Naive thymus-derived CD4-positive, alpha-beta T cell (primary cell): ENCODE measurements at regions of chr2 and their contacts with region 1.

Region 1: DNA sequence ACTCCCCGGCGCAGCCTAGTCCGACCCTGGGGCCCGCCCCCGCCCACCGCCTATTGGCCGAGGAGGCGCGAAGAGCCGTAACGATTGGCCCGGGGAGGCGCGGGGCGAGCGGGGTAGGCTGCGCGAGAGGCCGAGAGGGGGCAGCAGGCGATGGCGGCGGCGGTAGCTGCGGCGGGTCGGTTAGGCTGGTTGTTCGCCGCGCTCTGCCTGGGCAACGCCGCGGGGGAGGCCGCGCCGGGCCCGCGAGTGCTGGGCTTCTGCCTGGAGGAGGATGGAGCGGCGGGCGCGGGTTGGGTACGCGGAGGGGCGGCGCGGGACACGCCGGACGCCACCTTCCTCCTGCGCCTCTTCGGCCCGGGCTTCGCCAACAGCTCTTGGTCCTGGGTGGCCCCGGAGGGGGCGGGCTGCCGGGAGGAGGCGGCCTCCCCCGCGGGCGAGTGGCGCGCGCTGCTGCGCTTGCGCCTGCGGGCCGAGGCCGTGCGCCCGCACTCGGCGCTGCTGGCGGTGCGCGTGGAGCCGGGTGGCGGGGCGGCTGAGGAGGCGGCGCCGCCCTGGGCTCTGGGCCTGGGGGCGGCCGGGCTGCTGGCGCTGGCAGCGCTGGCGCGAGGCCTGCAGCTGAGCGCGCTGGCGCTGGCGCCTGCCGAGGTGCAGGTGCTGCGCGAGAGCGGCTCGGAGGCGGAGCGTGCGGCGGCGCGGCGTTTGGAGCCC is at the start of gene CNNM3:
- DNase-seq: peak; percentile 89 to 99 (median 93)
- ATAC-seq: peak; percentile 96
- H3K4me3 ChIP-seq: peak within 1 kb of the TSS; percentile 74
- H3K4me3 Mint-ChIP-seq: peak within 1 kb of the TSS; percentile 86 to 96 (median 92)
- H3K27ac ChIP-seq: peak within 1 kb of the TSS; percentile 79
- H3K27ac Mint-ChIP-seq: peak within 1 kb of the TSS; percentile 75 to 96 (median 86)
- H3K4me1 ChIP-seq: peaks cover 37 to 43% of the 10 kb centered on the region in 2 donors
- H3K4me1 Mint-ChIP-seq: peaks cover 36 to 62% (median 58%) of the 10 kb centered on the region in 7 donors
- H3K27me3 ChIP-seq: no peaks in the 10 kb centered on the region
- H3K27me3 Mint-ChIP-seq: no peaks in the 10 kb centered on the region
- total RNA-seq, gene CNNM3: 32.1 to 51.5 (median 44.6) TPM

Region 2: GRCh38 chr2:96208143-96209010 is 607.9 kb before region 1 on chr2 and contains the start of gene STARD7:
- CTCF ChIA-PET with region 1: no interaction called
- POLR2A ChIA-PET with region 1: no interaction called
- intact Hi-C with region 1: loop called in 1 of 2 experiments (anchors 5 kb)
- DNase-seq: peak; percentile 93 to 97 (median 95)
- ATAC-seq: peak; percentile 92
- H3K4me3 ChIP-seq: peak within 1 kb of the TSS; percentile 83
- H3K4me3 Mint-ChIP-seq: peak within 1 kb of the TSS; percentile 88 to 100 (median 95)
- H3K27ac ChIP-seq: peak within 1 kb of the TSS; percentile 87
- H3K27ac Mint-ChIP-seq: peak within 1 kb of the TSS; percentile 86 to 99 (median 93)
- H3K4me1 ChIP-seq: peaks cover 30 to 37% of the 10 kb centered on the region in 2 donors
- H3K4me1 Mint-ChIP-seq: peaks cover 37 to 57% (median 51%) of the 10 kb centered on the region in 7 donors
- H3K27me3 ChIP-seq: no peaks in the 10 kb centered on the region
- H3K27me3 Mint-ChIP-seq: no peaks in the 10 kb centered on the region
- total RNA-seq, gene STARD7: 56.5 to 133 (median 74.2) TPM

Region 3: DNA sequence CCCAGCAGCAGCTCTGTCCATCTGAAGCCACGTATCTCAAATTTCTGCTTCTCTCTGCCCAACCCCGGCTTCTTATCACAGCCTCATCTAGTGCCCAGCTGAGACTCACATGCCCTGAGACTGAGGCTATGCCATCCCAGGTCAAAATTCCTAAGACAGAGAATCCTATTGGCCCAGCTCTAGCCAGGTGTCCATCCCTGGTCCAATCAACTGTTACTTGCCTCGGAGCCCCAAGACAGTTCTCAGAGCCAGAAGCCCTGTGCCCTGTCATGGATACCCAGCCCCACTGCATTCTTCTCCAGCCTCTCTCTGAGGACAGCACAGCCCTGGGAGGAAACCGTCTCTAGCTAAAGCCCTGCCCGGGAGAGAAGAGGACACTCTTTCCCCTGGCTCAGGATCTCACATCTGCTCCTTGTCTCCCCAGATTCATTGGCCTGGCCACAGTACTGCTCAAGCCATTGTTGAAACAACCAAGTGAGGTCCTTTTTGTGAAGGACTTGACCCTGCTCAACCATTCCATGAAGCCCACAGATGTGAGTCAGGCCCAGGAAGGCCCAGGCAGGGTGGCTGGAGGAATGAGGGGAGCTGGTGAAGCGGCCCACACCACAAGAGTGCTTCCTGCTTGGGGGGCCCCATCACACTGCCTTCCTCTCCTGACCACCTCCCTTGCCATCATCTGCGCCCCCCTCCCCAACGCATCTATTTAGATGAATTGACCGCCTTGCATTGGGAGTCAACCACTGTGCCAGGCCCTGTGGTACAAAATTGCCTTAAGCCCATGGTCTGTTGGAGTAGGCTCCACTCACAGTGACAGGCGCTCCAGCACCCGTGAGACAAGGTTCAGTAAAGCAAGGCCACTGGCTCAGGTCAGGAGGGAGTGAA is 168.7 kb before region 1 on chr2:
- CTCF ChIA-PET with region 1: no interaction called
- POLR2A ChIA-PET with region 1: no interaction called
- intact Hi-C with region 1: no loop called
- DNase-seq: no peak
- ATAC-seq: peak; percentile 12
- H3K4me3 ChIP-seq: no peak overlapping the region
- H3K4me3 Mint-ChIP-seq: no peak overlapping the region
- H3K27ac ChIP-seq: no peak overlapping the region
- H3K27ac Mint-ChIP-seq: peak overlapping the region in 1 of 9 donors; percentile 6
- H3K4me1 ChIP-seq: no peaks in the 10 kb centered on the region
- H3K4me1 Mint-ChIP-seq: peaks cover 0 to 5% (median 0%) of the 10 kb centered on the region in 7 donors
- H3K27me3 ChIP-seq: no peaks in the 10 kb centered on the region
- H3K27me3 Mint-ChIP-seq: no peaks in the 10 kb centered on the region

Region 4: GRCh38 chr2:96702098-96702785 is 114.0 kb before region 1 on chr2:
- CTCF ChIA-PET with region 1: no interaction called
- POLR2A ChIA-PET with region 1: no interaction called
- intact Hi-C with region 1: no loop called
- DNase-seq: no peak
- ATAC-seq: no peak
- H3K4me3 ChIP-seq: no peak overlapping the region
- H3K4me3 Mint-ChIP-seq: no peak overlapping the region
- H3K27ac ChIP-seq: no peak overlapping the region
- H3K27ac Mint-ChIP-seq: no peak overlapping the region
- H3K4me1 ChIP-seq: no peaks in the 10 kb centered on the region
- H3K4me1 Mint-ChIP-seq: peaks cover 0 to 4% (median 0%) of the 10 kb centered on the region in 7 donors
- H3K27me3 ChIP-seq: no peaks in the 10 kb centered on the region
- H3K27me3 Mint-ChIP-seq: no peaks in the 10 kb centered on the region

Region 5: GRCh38 chr2:96739633-96740428 is 76.5 kb before region 1 on chr2 and contains the start of gene LMAN2L:
- CTCF ChIA-PET with region 1: no interaction called
- POLR2A ChIA-PET with region 1: interaction called, 3 read pairs
- intact Hi-C with region 1: loop called (anchors 1 kb)
- DNase-seq: peak; percentile 78 to 99 (median 94)
- ATAC-seq: peak; percentile 100
- H3K4me3 ChIP-seq: peak within 1 kb of the TSS; percentile 70
- H3K4me3 Mint-ChIP-seq: peak within 1 kb of the TSS; percentile 92 to 100 (median 97)
- H3K27ac ChIP-seq: peak within 1 kb of the TSS; percentile 75
- H3K27ac Mint-ChIP-seq: peak within 1 kb of the TSS; percentile 83 to 96 (median 90)
- H3K4me1 ChIP-seq: peaks cover 6% of the 10 kb centered on the region in 2 donors
- H3K4me1 Mint-ChIP-seq: peaks cover 20 to 48% (median 37%) of the 10 kb centered on the region in 7 donors
- H3K27me3 ChIP-seq: no peaks in the 10 kb centered on the region
- H3K27me3 Mint-ChIP-seq: no peaks in the 10 kb centered on the region
- total RNA-seq, gene LMAN2L: 5.0 to 10.9 (median 9.2) TPM

Region 6: DNA sequence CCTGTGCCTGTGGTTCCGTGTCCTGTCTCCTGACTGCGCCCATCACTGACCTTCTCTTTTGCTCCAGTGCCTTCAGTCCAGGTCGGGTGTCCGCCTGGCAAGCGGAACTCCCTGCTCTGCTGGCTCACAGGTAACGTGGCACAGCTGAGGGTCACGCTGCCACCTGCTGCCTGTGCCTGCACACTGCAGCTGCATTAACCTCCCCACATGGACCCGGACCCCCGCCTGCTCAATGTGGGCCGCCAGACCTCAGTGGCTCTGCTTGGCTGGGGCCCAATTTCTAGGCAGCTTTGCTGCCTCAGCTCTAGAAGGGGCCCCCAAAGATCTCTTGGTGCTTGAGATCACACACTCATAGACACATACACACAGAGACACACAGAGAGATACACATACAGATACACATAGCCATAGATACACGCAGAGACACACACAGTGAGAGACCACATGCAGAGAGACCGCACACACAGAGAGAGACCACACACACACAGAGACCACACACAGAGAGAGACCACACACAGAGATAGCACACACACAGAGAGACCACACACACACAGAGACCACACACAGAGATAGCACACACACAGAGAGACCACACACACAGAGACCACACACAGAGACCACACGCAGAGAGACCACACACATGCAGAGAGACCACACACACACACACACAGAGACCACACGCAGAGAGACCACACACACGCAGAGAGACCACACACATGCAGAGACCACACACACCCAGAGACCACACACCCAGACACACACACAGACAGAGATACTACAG is 15.1 kb before region 1 on chr2:
- CTCF ChIA-PET with region 1: interaction called, 7 read pairs
- POLR2A ChIA-PET with region 1: interaction called, 35 read pairs
- intact Hi-C with region 1: loop called in 1 of 2 experiments (anchors 1 kb)
- DNase-seq: peak; percentile 41 to 72 (median 63)
- ATAC-seq: peak; percentile 94
- H3K4me3 ChIP-seq: no peak overlapping the region
- H3K4me3 Mint-ChIP-seq: no peak overlapping the region
- H3K27ac ChIP-seq: no peak overlapping the region
- H3K27ac Mint-ChIP-seq: no peak overlapping the region
- H3K4me1 ChIP-seq: peaks cover 10 to 20% of the 10 kb centered on the region in 2 donors
- H3K4me1 Mint-ChIP-seq: peaks cover under 1 to 4% (median 2%) of the 10 kb centered on the region in 7 donors
- H3K27me3 ChIP-seq: no peaks in the 10 kb centered on the region
- H3K27me3 Mint-ChIP-seq: no peaks in the 10 kb centered on the region

Region 7: DNA sequence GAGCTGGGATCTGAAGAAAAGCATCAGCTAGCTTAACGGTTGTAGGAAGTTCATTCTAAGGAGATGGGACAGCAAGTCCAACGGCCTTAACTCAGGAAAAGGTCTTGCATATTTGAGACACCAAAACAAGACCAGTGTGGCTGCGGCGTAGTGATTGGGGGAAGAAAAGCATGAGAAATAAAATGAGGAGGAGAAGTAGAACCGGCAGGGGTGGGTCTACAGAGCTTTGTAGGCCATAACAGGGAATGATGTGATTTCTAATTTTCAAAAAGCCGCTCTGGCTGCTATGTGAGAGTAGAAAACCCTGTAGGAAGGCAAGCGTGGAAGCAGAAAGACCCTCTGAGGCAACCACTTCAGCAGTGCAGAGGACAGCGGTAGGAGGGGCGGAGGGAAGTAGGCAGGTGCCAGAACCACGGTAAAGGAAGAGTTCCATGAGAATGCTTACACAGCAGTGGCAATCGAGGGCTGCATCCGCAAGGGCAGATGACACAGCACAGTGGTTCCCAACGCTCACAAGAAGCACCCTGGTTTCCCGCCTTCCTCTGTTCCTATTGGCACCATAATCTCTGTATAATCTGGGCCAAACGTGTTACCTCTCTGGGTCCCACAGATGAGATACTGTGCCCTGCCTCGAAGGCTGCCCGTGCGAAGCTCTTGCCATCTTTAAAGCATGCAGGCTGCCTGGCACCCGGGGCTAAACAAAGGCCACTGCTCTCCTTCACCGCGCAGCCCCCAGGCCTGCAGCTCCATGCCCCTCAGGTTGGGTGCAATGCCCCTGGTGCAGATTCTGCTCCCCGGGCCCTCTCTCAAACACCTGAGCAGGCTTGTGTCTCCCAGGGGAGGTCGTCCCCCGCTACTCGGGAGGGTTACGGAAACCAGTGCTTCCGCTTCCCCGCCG is 40.7 kb after region 1 on chr2:
- CTCF ChIA-PET with region 1: interaction called, 13 read pairs
- POLR2A ChIA-PET with region 1: interaction called, 14 read pairs
- intact Hi-C with region 1: loop called (anchors 1 kb)
- DNase-seq: peak in 5 of 9 donors; percentile 27 to 39 (median 35)
- ATAC-seq: no peak
- H3K4me3 ChIP-seq: peak overlapping the region; percentile 72
- H3K4me3 Mint-ChIP-seq: peak overlapping the region; percentile 85 to 93 (median 89)
- H3K27ac ChIP-seq: peak overlapping the region; percentile 79
- H3K27ac Mint-ChIP-seq: peak overlapping the region; percentile 38 to 92 (median 84)
- H3K4me1 ChIP-seq: peaks cover 14 to 16% of the 10 kb centered on the region in 2 donors
- H3K4me1 Mint-ChIP-seq: peaks cover 21 to 57% (median 43%) of the 10 kb centered on the region in 7 donors
- H3K27me3 ChIP-seq: no peaks in the 10 kb centered on the region
- H3K27me3 Mint-ChIP-seq: no peaks in the 10 kb centered on the region